PC-3 (cell line): ENCODE measurements at regions of chr14 and their contacts with region 1.

Region 1: GRCh38 chr14:40312296-40312695 is 880.1 kb upstream of the FBXO33 start:
- DNase-seq: peak; percentile 66
- ATAC-seq: peak; percentile 95
- H3K4me3 ChIP-seq: no peak overlapping the region
- H3K27ac ChIP-seq: peak overlapping the region; percentile 10; the same call in 1 of the 2 replicates
- H3K4me1 ChIP-seq: peaks cover 9% of the 10 kb centered on the region
- H3K27me3 ChIP-seq: no peaks in the 10 kb centered on the region
- CTCF ChIP-seq: no peak

Region 2: DNA sequence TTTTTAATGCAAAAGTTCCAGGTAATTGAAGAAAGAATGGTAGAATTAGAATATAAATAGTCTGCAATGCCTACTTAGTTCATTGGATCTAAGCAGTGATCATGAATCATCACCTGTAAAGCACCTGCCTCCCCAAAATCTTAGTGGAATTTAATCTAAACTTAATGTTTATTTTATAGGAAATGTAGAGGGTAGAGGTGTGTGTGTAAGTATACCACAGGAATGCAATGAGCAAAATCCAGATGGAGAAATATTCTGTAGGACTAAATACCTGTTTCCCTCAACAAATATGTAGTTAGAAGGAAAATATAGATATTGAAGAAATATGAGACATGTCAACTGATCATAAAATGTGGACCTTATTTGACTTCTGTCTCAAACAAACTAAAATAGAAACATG is 40.8 kb before region 1 on chr14:
- CTCF ChIA-PET with region 1: no interaction called
- POLR2A ChIA-PET with region 1: no interaction called
- intact Hi-C with region 1: loop called (anchors 2 kb)
- DNase-seq: peak; percentile 81
- ATAC-seq: peak; percentile 99
- H3K4me3 ChIP-seq: no peak overlapping the region
- H3K27ac ChIP-seq: no peak overlapping the region
- H3K4me1 ChIP-seq: peaks cover 8% of the 10 kb centered on the region; the same call in 1 of the 2 replicates
- H3K27me3 ChIP-seq: no peaks in the 10 kb centered on the region
- CTCF ChIP-seq: no peak

Region 3: DNA sequence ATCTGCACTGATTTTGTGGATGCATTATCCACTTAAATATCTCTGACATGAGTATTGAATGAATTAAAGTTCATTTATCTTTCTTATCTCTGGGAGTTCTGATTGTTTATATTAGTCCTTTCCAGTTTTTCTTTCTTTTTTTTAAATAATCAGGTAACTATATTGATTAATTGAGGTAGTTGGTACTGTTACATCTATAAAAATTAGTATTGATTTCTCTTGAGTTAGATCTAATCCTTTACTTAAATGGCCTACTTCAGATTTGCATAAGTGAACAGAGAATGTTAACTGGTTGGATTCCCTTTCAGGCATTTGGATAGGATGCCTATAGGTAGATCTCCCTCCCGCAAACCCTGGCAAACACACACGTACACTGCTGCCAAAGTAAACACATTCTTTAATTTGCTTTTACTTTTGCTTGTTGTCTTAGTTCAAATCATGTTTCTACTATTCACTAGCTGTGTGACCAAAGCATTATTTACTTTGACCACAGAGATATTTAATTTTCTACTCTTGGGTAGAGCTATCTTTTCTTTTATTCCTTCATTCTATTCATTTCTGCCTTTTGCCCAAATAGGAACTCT is 55.9 kb after region 1 on chr14:
- CTCF ChIA-PET with region 1: no interaction called
- POLR2A ChIA-PET with region 1: no interaction called
- intact Hi-C with region 1: loop called (anchors 2 kb)
- DNase-seq: peak; percentile 87
- ATAC-seq: peak; percentile 92
- H3K4me3 ChIP-seq: no peak overlapping the region
- H3K27ac ChIP-seq: peak overlapping the region; percentile 66
- H3K4me1 ChIP-seq: peaks cover 23% of the 10 kb centered on the region
- H3K27me3 ChIP-seq: no peaks in the 10 kb centered on the region
- CTCF ChIP-seq: no peak

Region 4: GRCh38 chr14:40386433-40386832 is 74.1 kb after region 1 on chr14:
- CTCF ChIA-PET with region 1: no interaction called
- POLR2A ChIA-PET with region 1: no interaction called
- intact Hi-C with region 1: no loop called
- DNase-seq: no peak
- ATAC-seq: peak; percentile 85; the same call in 1 of the 2 replicates
- H3K4me3 ChIP-seq: no peak overlapping the region
- H3K27ac ChIP-seq: no peak overlapping the region
- H3K4me1 ChIP-seq: no peaks in the 10 kb centered on the region
- H3K27me3 ChIP-seq: peaks cover 3% of the 10 kb centered on the region; the same call in 1 of the 2 replicates
- CTCF ChIP-seq: no peak